Mammary epithelial cell (primary cell): ENCODE measurements at regions of chr7 and their contacts with region 1.

Region 1: GRCh38 chr7:17530741-17531417 is 232.4 kb downstream of the AHR start:
- DNase-seq: peak; percentile 28
- H3K4me3 ChIP-seq: no peak overlapping the region
- H3K27ac ChIP-seq: no peak overlapping the region
- H3K4me1 ChIP-seq: peaks cover 27% of the 10 kb centered on the region
- H3K27me3 ChIP-seq: no peaks in the 10 kb centered on the region
- CTCF ChIP-seq: peak in 1 of 2 donors; percentile 31

Region 2: GRCh38 chr7:17304926-17305325 is 226.0 kb before region 1 on chr7:
- CTCF ChIA-PET with region 1: interaction called, 4 read pairs
- dilution Hi-C with region 1: no loop called
- in situ Hi-C with region 1: no loop called
- intact Hi-C with region 1: loop called (anchors 2 kb)
- DNase-seq: peak; percentile 91
- H3K4me3 ChIP-seq: peak overlapping the region; percentile 15 to 71 (median 36)
- H3K27ac ChIP-seq: peak overlapping the region; percentile 77
- H3K4me1 ChIP-seq: peaks cover 42% of the 10 kb centered on the region
- H3K27me3 ChIP-seq: no peaks in the 10 kb centered on the region
- CTCF ChIP-seq: no peak

Region 3: GRCh38 chr7:17370092-17370491 is 160.8 kb before region 1 on chr7:
- CTCF ChIA-PET with region 1: no interaction called
- dilution Hi-C with region 1: no loop called
- in situ Hi-C with region 1: no loop called
- intact Hi-C with region 1: loop called (anchors 5 kb)
- DNase-seq: peak; percentile 86
- H3K4me3 ChIP-seq: no peak overlapping the region
- H3K27ac ChIP-seq: peak overlapping the region; percentile 97
- H3K4me1 ChIP-seq: peaks cover 46% of the 10 kb centered on the region
- H3K27me3 ChIP-seq: no peaks in the 10 kb centered on the region
- CTCF ChIP-seq: no peak

Region 4: GRCh38 chr7:17408245-17408903 is 122.5 kb before region 1 on chr7:
- CTCF ChIA-PET with region 1: no interaction called
- dilution Hi-C with region 1: no loop called
- in situ Hi-C with region 1: no loop called
- intact Hi-C with region 1: loop called (anchors 10 kb)
- DNase-seq: peak; percentile 93
- H3K4me3 ChIP-seq: no peak overlapping the region
- H3K27ac ChIP-seq: peak overlapping the region; percentile 37
- H3K4me1 ChIP-seq: peaks cover 16% of the 10 kb centered on the region
- H3K27me3 ChIP-seq: no peaks in the 10 kb centered on the region
- CTCF ChIP-seq: no peak

Region 5: GRCh38 chr7:17638727-17639126 is 107.8 kb after region 1 on chr7:
- CTCF ChIA-PET with region 1: no interaction called
- dilution Hi-C with region 1: no loop called
- in situ Hi-C with region 1: no loop called
- intact Hi-C with region 1: loop called (anchors 2 kb)
- DNase-seq: peak; percentile 78
- H3K4me3 ChIP-seq: no peak overlapping the region
- H3K27ac ChIP-seq: no peak overlapping the region
- H3K4me1 ChIP-seq: peaks cover 11% of the 10 kb centered on the region
- H3K27me3 ChIP-seq: no peaks in the 10 kb centered on the region
- CTCF ChIP-seq: no peak

Region 6: DNA sequence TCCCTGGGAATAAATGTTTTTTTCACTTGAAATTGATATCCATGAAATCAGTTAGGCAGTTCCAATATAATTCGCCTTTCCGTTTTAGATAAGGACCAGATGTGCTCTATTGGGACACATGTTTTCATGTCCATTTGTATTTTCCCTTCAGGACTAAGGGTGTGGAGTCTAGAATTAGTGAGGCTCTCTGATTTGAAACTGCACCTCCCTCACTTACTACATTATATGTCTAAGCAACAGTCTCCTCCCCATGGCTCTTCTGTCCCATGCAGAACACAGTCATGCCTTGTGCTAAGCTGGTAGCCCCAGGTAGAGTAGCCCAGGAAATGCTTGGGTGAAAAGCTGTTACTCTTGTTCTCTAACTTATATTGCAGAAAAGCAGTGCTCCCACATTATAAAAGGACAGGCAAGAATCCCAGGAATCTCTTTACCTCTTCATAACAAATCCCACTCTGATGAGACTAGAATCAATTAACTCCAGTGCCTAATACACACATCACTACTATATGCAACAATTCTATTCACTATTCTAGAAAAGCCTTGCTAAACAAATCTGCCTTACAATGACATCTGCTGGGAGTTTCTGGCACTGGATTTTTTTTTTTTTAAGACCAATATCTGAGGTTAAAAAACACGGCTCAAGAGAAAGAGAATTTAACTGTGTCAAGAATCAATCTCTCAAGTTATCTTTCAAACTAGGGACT is 115.5 kb after region 1 on chr7:
- CTCF ChIA-PET with region 1: no interaction called
- dilution Hi-C with region 1: no loop called
- in situ Hi-C with region 1: no loop called
- intact Hi-C with region 1: loop called (anchors 2 kb)
- DNase-seq: peak; percentile 57
- H3K4me3 ChIP-seq: no peak overlapping the region
- H3K27ac ChIP-seq: no peak overlapping the region
- H3K4me1 ChIP-seq: peaks cover 8% of the 10 kb centered on the region
- H3K27me3 ChIP-seq: no peaks in the 10 kb centered on the region
- CTCF ChIP-seq: peak; percentile 40 to 53

Region 7: GRCh38 chr7:18491871-18492270 is 961.0 kb after region 1 on chr7:
- CTCF ChIA-PET with region 1: no interaction called
- dilution Hi-C with region 1: no loop called
- in situ Hi-C with region 1: no loop called
- intact Hi-C with region 1: no loop called
- DNase-seq: no peak
- H3K4me3 ChIP-seq: no peak overlapping the region
- H3K27ac ChIP-seq: no peak overlapping the region
- H3K4me1 ChIP-seq: peaks cover 15% of the 10 kb centered on the region
- H3K27me3 ChIP-seq: no peaks in the 10 kb centered on the region
- CTCF ChIP-seq: no peak